ENCODE measurements at regions of chr3 and their contacts with region 1.

Region 1: GRCh38 chr3:78659386-78659987 is 1108.3 kb downstream of the ROBO1 start:
- DNase-seq: no peak
- H3K4me3 ChIP-seq: no peak overlapping the region
- H3K27ac ChIP-seq: no peak overlapping the region
- H3K4me1 ChIP-seq: no peaks in the 10 kb centered on the region
- H3K27me3 ChIP-seq: no peaks in the 10 kb centered on the region
- CTCF ChIP-seq: peak; percentile 30 to 79 (median 56)

Region 2: DNA sequence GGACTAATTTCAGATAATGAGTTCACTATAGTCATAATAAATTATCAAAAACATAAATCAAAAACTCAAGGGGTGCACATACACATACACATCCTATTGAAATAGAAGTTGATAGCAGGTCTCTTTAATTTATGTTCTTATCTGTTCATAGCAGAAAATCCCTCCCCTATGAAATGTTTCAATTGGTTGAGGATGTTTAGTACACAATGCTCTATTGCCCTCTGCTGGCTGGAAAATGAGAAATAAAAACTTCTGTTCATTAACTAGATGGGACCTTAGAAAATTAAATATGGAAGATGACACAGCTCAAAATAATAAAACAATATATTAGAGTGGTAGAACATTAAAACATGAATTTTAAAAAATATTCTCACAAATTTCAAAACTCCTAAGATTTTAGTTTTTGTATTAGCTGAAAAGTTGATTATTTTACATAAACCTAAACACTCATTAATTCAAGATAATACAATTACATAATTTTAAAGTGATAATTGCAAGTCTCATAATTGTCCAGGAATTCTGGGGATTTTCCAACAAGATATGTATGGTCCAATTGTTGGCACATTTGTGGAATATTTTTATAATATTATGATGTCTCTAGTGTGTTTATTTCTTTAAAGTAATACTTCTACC is 373.3 kb after region 1 on chr3:
- intact Hi-C with region 1: loop called (anchors 1 kb)
- DNase-seq: no peak
- H3K4me3 ChIP-seq: no peak overlapping the region
- H3K27ac ChIP-seq: no peak overlapping the region
- H3K4me1 ChIP-seq: no peaks in the 10 kb centered on the region
- H3K27me3 ChIP-seq: no peaks in the 10 kb centered on the region
- CTCF ChIP-seq: peak in 2 of 3 experiments; percentile 58 to 69

Measured in ascending aorta (tissue), 2 donors.